AG04449 (cell line): ENCODE measurements at regions of chr14 and their contacts with region 1.

Region 1: GRCh38 chr14:61475316-61475715 is 153.9 kb downstream of the PRKCH start:
- DNase-seq: no peak
- H3K4me3 ChIP-seq: no peak overlapping the region
- CTCF ChIP-seq: peak; percentile 35

Region 2: DNA sequence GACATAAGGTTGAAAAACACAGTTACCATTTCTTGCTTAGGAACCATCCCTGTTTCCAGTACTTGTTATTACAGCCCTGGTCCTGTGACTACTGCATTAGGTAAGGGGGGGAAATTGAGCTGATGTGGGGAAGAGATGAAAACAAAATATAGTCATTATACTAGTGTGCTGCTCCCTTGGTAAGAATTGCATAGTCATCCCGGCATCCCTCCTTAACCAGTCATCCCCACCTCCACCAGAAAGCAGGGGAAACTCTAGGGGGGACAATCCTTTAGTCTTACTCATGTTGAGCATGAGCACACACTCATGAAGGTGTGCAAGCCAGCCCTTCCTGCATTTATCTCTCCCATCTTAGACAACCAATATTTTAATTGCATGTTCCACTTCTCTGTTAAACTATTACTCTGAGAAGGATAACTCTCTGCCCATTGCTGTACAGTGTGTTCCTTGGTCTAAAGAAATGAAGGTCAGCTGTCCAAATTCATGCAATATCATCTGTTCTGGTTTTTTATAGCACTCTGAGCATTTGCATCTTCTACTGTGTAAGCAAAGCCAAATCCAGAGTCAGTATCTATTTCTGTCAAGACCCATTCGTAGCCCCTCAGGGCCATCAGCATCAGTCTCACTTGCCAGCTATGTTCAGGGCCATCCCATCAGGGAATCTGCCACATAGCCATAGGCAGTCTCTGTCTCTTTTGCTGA is 240.9 kb before region 1 on chr14:
- CTCF ChIA-PET with region 1: no interaction called
- POLR2A ChIA-PET with region 1: no interaction called
- DNase-seq: no peak
- H3K4me3 ChIP-seq: no peak overlapping the region
- CTCF ChIP-seq: no peak

Region 3: GRCh38 chr14:61438860-61439684 is 36.2 kb before region 1 on chr14:
- CTCF ChIA-PET with region 1: no interaction called
- POLR2A ChIA-PET with region 1: no interaction called
- DNase-seq: no peak
- H3K4me3 ChIP-seq: no peak overlapping the region
- CTCF ChIP-seq: no peak

Region 4: GRCh38 chr14:61461808-61462275 is 13.5 kb before region 1 on chr14:
- CTCF ChIA-PET with region 1: interaction called, 11 read pairs
- POLR2A ChIA-PET with region 1: no interaction called
- DNase-seq: no peak
- H3K4me3 ChIP-seq: no peak overlapping the region
- CTCF ChIP-seq: peak; percentile 30

Region 5: GRCh38 chr14:61525293-61526011 is 50.1 kb after region 1 on chr14:
- CTCF ChIA-PET with region 1: interaction called, 16 read pairs
- POLR2A ChIA-PET with region 1: interaction called, 5 read pairs
- DNase-seq: no peak
- H3K4me3 ChIP-seq: no peak overlapping the region
- CTCF ChIP-seq: no peak

Region 6: DNA sequence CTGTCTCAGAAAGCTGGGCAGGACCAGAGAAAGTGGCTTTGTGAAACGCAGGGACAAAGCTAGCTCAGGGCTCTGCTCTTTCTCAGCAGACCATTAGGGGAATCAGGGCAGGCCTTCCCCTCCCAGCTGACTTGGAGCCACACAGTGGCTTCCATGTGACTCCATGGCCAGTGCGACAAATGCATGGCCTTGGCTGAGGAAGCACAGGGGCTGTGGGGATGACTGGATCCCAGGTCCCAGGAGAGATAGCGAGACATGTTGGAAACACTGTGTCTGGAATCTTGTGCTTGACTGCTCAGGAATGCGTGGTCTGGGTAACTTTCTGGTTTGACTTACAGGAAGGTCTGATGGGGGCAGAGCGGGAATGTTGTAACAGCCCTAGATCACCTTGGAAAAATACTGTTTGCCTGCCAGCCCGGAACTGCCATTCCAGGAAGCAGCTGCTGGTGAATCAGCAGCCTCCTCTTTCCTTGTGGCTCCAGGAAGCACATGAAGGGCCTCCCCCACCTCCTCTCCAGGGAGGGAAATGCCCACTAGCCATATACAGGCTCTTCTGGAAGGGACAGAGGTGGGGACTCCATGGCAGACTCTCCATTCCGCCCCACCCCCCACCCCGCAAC is 86.5 kb after region 1 on chr14:
- CTCF ChIA-PET with region 1: interaction called, 37 read pairs
- POLR2A ChIA-PET with region 1: interaction called, 9 read pairs
- DNase-seq: peak; percentile 99
- H3K4me3 ChIP-seq: no peak overlapping the region; the same call in 1 of the 2 replicates
- CTCF ChIP-seq: no peak

Region 7: GRCh38 chr14:61694830-61695694 is 219.7 kb after region 1 on chr14 and contains the start of gene HIF1A:
- CTCF ChIA-PET with region 1: interaction called, 11 read pairs
- POLR2A ChIA-PET with region 1: interaction called, 6 read pairs
- DNase-seq: peak; percentile 95
- H3K4me3 ChIP-seq: peak within 1 kb of the TSS; percentile 87
- CTCF ChIP-seq: peak; percentile 45

Region 8: GRCh38 chr14:61837336-61838229 is 362.3 kb after region 1 on chr14:
- CTCF ChIA-PET with region 1: interaction called, 18 read pairs
- POLR2A ChIA-PET with region 1: no interaction called
- DNase-seq: no peak
- H3K4me3 ChIP-seq: no peak overlapping the region
- CTCF ChIP-seq: peak; percentile 88